Heart right ventricle (tissue), 16 donors: ENCODE measurements at regions of chr9 and their contacts with region 1.

Region 1: DNA sequence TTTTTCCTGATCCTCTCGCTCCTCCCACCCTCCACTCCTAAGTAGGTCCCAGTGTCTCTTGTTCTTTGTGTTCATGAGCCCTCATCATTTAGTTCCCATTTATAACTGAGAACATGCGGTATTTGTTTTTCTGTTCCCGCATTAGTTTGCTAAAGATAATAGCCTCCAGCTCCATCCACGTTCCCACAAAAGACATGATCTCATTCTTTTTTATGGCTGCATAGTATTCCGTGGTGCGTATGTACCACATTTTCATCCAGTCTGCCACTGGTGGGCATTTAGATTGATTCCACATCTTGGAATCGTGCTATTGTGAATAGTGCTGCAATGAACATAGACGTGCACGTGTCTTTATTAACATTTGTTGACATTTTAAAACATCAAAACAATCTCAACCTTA is 34.2 kb upstream of the CACNA1B start:
- DNase-seq: no peak
- ATAC-seq: no peak
- H3K4me3 ChIP-seq: no peak overlapping the region
- H3K27ac ChIP-seq: no peak overlapping the region
- H3K4me1 ChIP-seq: no peaks in the 10 kb centered on the region
- H3K27me3 ChIP-seq: no peaks in the 10 kb centered on the region
- CTCF ChIP-seq: no peak

Region 2: DNA sequence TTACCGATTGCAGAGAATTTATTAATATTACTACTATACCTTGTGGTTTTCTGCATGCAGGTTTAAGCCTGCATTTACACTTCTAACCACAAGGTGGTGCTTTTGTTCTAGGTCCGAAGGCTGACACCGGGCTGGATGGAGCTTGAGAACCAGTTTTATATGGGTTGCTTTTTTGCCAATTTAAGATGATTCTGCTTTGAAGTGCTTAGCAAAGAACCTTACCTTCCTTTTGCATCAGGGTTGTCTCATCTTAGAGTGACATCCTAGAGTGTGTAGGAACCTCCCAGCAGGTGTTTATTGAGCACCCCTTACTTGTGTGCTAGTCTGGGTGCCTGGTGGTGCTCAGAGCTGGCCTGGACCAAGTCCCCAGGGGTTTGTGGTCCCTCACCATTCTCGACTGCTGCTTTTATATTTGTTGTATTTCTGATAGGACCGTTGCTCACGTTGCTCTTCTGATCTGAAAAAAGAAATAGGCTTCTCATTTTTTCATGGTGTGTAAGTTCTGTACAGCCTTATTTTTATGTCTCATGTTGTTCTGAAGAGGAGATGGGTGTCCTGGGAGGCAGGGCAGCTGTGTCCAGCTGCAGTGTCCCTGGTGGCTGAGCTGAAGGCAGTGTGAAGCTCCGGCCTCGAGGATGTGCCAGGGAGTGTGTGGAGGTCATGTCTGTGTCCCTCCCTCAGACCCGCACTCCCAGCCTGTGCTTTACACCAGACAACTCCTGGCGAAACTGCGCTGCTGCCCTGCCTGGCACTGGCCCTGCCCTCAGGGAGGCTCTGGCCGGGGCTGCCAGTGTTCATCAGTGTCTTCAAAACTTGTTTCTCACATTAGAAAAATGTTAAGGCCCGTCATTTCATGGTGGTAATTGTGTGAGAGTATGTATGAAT is 170.2 kb before region 1 on chr9:
- intact Hi-C with region 1: no loop called
- DNase-seq: peak; percentile 31 to 51
- ATAC-seq: peak; percentile 39 to 70 (median 55)
- H3K4me3 ChIP-seq: no peak overlapping the region
- H3K27ac ChIP-seq: peak overlapping the region in 6 of 10 donors; percentile 1 to 56 (median 10)
- H3K4me1 ChIP-seq: peaks cover 9 to 54% (median 44%) of the 10 kb centered on the region in 9 donors
- H3K27me3 ChIP-seq: no peaks in the 10 kb centered on the region
- CTCF ChIP-seq: peak; percentile 80 to 90 (median 86)

Region 3: GRCh38 chr9:137989999-137990715 is 146.8 kb after region 1 on chr9:
- intact Hi-C with region 1: loop called in 1 of 10 experiments (anchors 10 kb)
- DNase-seq: no peak
- ATAC-seq: no peak
- H3K4me3 ChIP-seq: no peak overlapping the region
- H3K27ac ChIP-seq: no peak overlapping the region
- H3K4me1 ChIP-seq: no peaks in the 10 kb centered on the region
- H3K27me3 ChIP-seq: peaks cover 0 to 64% (median 24%) of the 10 kb centered on the region in 7 donors
- CTCF ChIP-seq: no peak